AG04450 (cell line): ENCODE measurements at regions of chr4 and their contacts with region 1.

Region 1: GRCh38 chr4:13654158-13654797 is 26.8 kb upstream of the BOD1L1 start:
- DNase-seq: no peak
- H3K4me3 ChIP-seq: peak overlapping the region; percentile 70
- H3K27ac ChIP-seq: no peak overlapping the region
- H3K27me3 ChIP-seq: no peaks in the 10 kb centered on the region
- CTCF ChIP-seq: peak; percentile 96

Region 2: DNA sequence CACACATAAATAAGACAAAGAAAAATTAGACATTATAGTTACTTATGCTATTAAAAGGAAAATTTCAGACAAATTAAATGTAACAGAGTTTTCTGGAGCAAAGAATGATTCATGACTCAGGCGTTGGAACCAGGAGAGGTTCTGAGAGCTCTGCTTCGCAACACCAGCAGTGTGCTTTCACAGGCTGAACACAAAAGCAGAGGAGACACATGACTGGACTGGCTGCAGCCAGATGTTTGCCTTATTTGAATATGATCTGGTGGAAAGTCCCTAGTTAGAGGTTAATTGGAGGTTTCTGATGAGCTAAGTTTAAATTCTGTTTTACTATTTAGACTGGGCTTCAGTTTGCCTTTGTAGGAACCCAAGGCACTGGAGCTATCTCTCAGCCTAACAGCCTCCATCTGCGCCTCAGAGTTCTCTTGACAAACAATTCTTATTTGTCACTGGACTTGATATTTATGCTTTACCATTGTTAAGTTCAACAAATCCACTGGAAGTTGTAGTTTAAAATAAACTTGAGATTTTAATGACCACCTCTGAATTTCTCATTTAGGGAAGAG is 42.9 kb before region 1 on chr4:
- CTCF ChIA-PET with region 1: interaction called, 10 read pairs
- POLR2A ChIA-PET with region 1: no interaction called
- DNase-seq: peak; percentile 45
- H3K4me3 ChIP-seq: no peak overlapping the region
- H3K27ac ChIP-seq: no peak overlapping the region
- H3K27me3 ChIP-seq: no peaks in the 10 kb centered on the region
- CTCF ChIP-seq: no peak

Region 3: DNA sequence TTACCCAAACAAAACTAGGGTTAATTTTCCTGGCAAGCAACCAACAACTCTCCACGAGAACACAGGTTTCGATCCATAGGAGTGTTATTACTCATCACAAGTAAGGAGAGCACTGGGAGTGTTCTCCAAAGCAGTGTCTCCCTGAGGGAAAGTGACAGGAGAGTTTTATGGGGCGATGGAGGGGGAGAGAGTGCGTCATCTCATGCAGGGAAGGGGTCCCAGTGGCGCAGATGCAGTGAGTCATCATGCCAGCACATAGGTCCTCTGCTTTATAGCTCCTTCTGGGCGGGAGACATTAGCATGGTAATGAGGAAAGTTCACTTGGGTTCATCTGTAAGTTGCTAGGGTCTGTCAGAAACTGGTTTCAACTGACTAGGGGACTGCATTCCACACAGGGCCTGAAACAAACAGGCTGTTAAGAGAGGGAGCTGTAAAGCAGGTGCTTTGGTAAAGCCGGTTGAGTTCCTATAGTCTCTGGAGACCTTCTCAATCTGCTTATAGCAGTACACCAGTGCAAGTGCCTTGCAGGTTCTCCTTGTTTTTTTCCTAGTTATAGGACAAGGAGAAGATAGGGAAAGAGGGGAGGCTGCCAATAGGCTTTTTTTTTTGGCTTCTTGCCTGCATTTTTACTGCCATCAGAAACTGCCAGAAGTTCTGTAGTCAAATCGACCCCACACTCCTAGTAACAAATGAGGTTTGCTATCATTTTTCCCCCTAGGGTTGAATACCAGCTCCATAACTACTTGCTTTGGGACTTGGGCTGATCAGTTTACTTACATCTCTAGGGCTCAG is 13.9 kb before region 1 on chr4:
- CTCF ChIA-PET with region 1: interaction called, 89 read pairs
- POLR2A ChIA-PET with region 1: no interaction called
- DNase-seq: no peak
- H3K4me3 ChIP-seq: 0 out of 2 replicates have a peak overlapping the region, but pooled peaks have one; percentile 10
- H3K27ac ChIP-seq: no peak overlapping the region
- H3K27me3 ChIP-seq: peaks cover 9% of the 10 kb centered on the region
- CTCF ChIP-seq: no peak

Region 4: GRCh38 chr4:13860126-13860525 is 205.8 kb after region 1 on chr4:
- CTCF ChIA-PET with region 1: no interaction called
- POLR2A ChIA-PET with region 1: no interaction called
- DNase-seq: no peak
- H3K4me3 ChIP-seq: no peak overlapping the region
- H3K27ac ChIP-seq: no peak overlapping the region
- H3K27me3 ChIP-seq: no peaks in the 10 kb centered on the region
- CTCF ChIP-seq: no peak

Region 5: DNA sequence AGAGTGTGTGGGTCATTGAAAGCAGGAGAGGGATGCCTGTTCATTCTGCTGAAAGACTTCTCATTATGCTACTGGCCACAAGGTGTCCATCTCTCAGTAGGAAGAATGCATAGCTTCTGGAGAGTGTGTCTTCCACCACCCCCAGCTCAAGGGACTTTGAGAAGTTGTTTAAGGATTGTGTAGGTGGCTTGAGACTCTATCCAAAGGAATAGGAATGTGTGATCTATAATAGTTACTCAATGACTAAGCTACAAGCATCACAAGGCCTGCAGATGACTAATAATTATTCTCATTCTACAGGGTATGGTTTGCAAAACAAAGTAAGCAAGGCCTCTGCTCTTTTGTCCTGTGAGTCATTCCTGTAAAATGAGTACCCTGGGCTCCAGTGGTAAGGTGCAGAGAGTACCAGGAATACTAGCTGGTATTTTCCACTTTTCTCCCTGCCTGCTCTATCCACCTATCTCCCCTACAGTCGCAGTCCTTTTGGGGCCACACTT is 253.0 kb after region 1 on chr4:
- CTCF ChIA-PET with region 1: interaction called, 13 read pairs
- POLR2A ChIA-PET with region 1: no interaction called
- DNase-seq: peak; percentile 90
- H3K4me3 ChIP-seq: no peak overlapping the region
- H3K27ac ChIP-seq: peak overlapping the region; percentile 93
- H3K27me3 ChIP-seq: no peaks in the 10 kb centered on the region
- CTCF ChIP-seq: peak; percentile 61

Region 6: GRCh38 chr4:13990596-13991589 is 336.6 kb after region 1 on chr4:
- CTCF ChIA-PET with region 1: interaction called, 10 read pairs
- POLR2A ChIA-PET with region 1: no interaction called
- DNase-seq: no peak
- H3K4me3 ChIP-seq: no peak overlapping the region
- H3K27ac ChIP-seq: no peak overlapping the region
- H3K27me3 ChIP-seq: no peaks in the 10 kb centered on the region
- CTCF ChIP-seq: no peak